IMR-90 (cell line): ENCODE measurements at regions of chr1 and their contacts with region 1.

Region 1: GRCh38 chr1:173937062-173937461 is 19.9 kb upstream of the SERPINC1 start:
- DNase-seq: no peak
- ATAC-seq: no peak
- H3K4me3 ChIP-seq: no peak overlapping the region
- H3K27ac ChIP-seq: no peak overlapping the region
- H3K4me1 ChIP-seq: no peaks in the 10 kb centered on the region
- H3K27me3 ChIP-seq: no peaks in the 10 kb centered on the region
- CTCF ChIP-seq: no peak
- POLR2A ChIP-seq: no peak
- RAD21 ChIP-seq: no peak

Region 2: DNA sequence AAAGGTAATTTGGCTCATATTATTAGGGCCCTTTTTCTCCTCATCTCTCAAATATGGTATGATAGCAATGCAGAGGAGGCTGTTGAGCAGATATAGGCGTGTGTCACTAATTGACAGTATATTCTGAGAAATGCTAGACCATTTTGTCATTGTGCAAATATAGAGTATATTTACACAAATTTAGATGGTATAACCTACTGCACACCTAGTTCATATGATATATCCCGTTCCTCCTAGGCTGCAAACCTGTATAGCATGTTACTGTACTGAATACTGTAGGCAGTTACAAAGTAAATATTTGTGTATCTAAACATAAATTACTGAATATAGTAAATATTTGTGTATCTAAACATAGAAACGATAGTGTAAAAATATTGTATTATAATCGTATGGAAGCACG is 60.3 kb before region 1 on chr1:
- CTCF ChIA-PET with region 1: no interaction called
- POLR2A ChIA-PET with region 1: no interaction called
- dilution Hi-C with region 1: no loop called
- in situ Hi-C with region 1: no loop called
- intact Hi-C with region 1: loop called (anchors 5 kb)
- DNase-seq: no peak
- ATAC-seq: no peak
- H3K4me3 ChIP-seq: no peak overlapping the region
- H3K27ac ChIP-seq: no peak overlapping the region
- H3K4me1 ChIP-seq: no peaks in the 10 kb centered on the region
- H3K27me3 ChIP-seq: no peaks in the 10 kb centered on the region
- CTCF ChIP-seq: no peak
- POLR2A ChIP-seq: no peak
- RAD21 ChIP-seq: no peak

Region 3: GRCh38 chr1:173914366-173914871 is 22.6 kb before region 1 on chr1:
- CTCF ChIA-PET with region 1: no interaction called
- POLR2A ChIA-PET with region 1: no interaction called
- dilution Hi-C with region 1: no loop called
- in situ Hi-C with region 1: no loop called
- intact Hi-C with region 1: no loop called
- DNase-seq: peak; percentile 18
- ATAC-seq: no peak
- H3K4me3 ChIP-seq: no peak overlapping the region
- H3K27ac ChIP-seq: no peak overlapping the region
- H3K4me1 ChIP-seq: no peaks in the 10 kb centered on the region
- H3K27me3 ChIP-seq: no peaks in the 10 kb centered on the region
- CTCF ChIP-seq: peak; percentile 43
- POLR2A ChIP-seq: no peak
- RAD21 ChIP-seq: peak; percentile 23; the same call in 1 of the 2 replicates

Region 4: GRCh38 chr1:173970252-173970651 is 33.2 kb after region 1 on chr1:
- CTCF ChIA-PET with region 1: no interaction called
- POLR2A ChIA-PET with region 1: no interaction called
- dilution Hi-C with region 1: no loop called
- in situ Hi-C with region 1: no loop called
- intact Hi-C with region 1: loop called (anchors 5 kb)
- DNase-seq: no peak
- ATAC-seq: no peak
- H3K4me3 ChIP-seq: no peak overlapping the region
- H3K27ac ChIP-seq: no peak overlapping the region
- H3K4me1 ChIP-seq: no peaks in the 10 kb centered on the region
- H3K27me3 ChIP-seq: no peaks in the 10 kb centered on the region
- CTCF ChIP-seq: no peak
- POLR2A ChIP-seq: no peak
- RAD21 ChIP-seq: no peak